Activated CD4-positive, alpha-beta memory T cell treated with anti-CD3 and anti-CD28 coated beads, Interleukin-2, amount 10 ng/mL, durations not matched to agents 7 days and 5 days (primary cell): ENCODE measurements at regions of chr14 and their contacts with region 1.

Region 1: DNA sequence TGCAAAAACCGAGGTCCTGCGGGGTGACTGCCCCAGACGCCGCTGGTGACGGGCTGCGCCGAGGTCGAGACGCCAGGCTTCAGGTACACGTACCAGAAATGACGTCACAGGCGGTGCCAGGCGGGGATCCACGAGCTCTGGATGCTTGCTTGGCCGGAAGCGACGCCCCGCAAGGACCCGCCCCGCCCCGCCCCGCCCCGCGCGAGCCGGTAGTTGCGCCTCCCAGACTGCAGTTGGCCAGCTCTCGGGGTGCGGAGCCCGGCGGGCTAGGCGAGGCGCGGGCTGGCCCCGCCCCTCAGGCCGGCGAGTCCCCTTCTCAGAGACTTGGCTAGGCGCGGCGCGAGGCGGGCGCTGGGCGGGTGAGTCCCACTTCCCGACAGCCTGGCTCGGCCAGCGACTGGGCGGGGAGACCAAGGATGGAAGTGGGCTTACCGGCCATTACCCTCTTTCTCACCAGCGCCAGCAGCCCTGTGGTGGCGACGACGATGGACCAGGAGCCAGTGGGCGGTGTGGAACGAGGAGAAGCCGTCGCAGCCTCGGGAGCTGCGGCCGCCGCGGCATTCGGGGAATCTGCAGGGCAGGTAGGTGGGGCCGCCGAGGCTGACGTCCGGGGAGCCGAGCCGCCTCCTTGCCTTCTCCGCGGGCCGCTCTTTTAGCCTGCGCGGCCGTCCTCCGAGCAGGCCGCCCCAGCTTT is at the start of gene FAM177A1:
- DNase-seq: peak; percentile 99
- H3K4me3 Mint-ChIP-seq: peak within 1 kb of the TSS; percentile 83
- H3K27ac Mint-ChIP-seq: peak within 1 kb of the TSS; percentile 96
- H3K4me1 Mint-ChIP-seq: peaks cover 37% of the 10 kb centered on the region
- H3K27me3 Mint-ChIP-seq: no peaks in the 10 kb centered on the region
- total RNA-seq, gene FAM177A1: 51.4 to 51.5 TPM

Region 2: DNA sequence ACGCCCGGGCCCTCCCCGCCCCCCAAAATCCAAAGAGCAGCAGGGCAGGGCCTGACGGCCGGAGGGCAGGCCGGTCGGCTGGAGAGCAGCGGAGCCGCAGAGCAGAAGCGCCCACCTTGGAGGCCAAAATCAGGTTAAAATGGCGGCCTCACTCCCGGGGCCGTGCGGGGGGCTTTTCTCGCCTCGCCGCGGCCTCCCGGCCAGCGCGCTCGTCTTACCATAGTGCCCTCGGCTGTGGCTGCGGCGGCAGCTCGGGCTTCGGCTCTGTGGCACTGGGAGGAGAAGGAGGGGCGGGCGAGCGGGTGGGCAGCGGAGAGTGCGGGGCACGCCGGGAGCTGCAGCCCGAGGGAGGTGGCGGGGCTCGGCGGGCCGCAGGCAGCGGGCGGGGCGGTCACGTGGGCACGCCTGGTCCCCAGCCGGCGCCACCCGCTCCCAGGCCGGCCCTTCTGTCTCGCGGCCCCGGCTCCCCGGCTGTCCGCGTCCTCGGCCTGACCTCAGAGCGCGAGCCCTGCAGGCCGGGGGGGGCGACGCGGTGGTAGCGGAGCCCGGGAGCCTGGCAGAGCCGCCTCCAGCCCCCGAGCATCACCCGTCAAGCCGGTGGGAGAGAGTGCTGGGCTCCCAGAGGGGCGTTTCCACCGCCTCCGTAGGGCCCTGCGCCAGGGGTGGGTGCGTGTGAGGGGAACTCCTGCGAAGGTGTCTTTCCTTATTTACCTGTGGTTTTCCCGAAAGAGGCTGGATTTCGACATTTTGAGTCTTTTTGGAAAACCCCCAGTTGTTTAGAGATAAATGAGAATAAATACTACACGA is 331.7 kb before region 1 on chr14 and contains the start of gene CFL2:
- CTCF ChIA-PET with region 1: no interaction called
- POLR2A ChIA-PET with region 1: interaction called, 10 read pairs
- DNase-seq: peak; percentile 70
- H3K4me3 Mint-ChIP-seq: peak within 1 kb of the TSS; percentile 87
- H3K27ac Mint-ChIP-seq: peak within 1 kb of the TSS; percentile 73
- H3K4me1 Mint-ChIP-seq: peaks cover 33% of the 10 kb centered on the region
- H3K27me3 Mint-ChIP-seq: peaks cover 4% of the 10 kb centered on the region
- total RNA-seq, gene CFL2: 7.7 to 9.0 TPM

Region 3: GRCh38 chr14:34875031-34875922 is 170.9 kb before region 1 on chr14 and contains the start of gene BAZ1A:
- CTCF ChIA-PET with region 1: no interaction called
- POLR2A ChIA-PET with region 1: interaction called, 20 read pairs
- DNase-seq: peak; percentile 44
- H3K4me3 Mint-ChIP-seq: peak within 1 kb of the TSS; percentile 96
- H3K27ac Mint-ChIP-seq: peak within 1 kb of the TSS; percentile 99
- H3K4me1 Mint-ChIP-seq: peaks cover 37% of the 10 kb centered on the region
- H3K27me3 Mint-ChIP-seq: no peaks in the 10 kb centered on the region
- total RNA-seq, gene BAZ1A: 49.8 to 53.1 TPM

Region 4: GRCh38 chr14:34931206-34931605 is 115.0 kb before region 1 on chr14:
- CTCF ChIA-PET with region 1: no interaction called
- POLR2A ChIA-PET with region 1: interaction called, 12 read pairs
- DNase-seq: peak; percentile 27
- H3K4me3 Mint-ChIP-seq: peak overlapping the region; percentile 4
- H3K27ac Mint-ChIP-seq: peak overlapping the region; percentile 91
- H3K4me1 Mint-ChIP-seq: peaks cover 32% of the 10 kb centered on the region
- H3K27me3 Mint-ChIP-seq: no peaks in the 10 kb centered on the region

Region 5: DNA sequence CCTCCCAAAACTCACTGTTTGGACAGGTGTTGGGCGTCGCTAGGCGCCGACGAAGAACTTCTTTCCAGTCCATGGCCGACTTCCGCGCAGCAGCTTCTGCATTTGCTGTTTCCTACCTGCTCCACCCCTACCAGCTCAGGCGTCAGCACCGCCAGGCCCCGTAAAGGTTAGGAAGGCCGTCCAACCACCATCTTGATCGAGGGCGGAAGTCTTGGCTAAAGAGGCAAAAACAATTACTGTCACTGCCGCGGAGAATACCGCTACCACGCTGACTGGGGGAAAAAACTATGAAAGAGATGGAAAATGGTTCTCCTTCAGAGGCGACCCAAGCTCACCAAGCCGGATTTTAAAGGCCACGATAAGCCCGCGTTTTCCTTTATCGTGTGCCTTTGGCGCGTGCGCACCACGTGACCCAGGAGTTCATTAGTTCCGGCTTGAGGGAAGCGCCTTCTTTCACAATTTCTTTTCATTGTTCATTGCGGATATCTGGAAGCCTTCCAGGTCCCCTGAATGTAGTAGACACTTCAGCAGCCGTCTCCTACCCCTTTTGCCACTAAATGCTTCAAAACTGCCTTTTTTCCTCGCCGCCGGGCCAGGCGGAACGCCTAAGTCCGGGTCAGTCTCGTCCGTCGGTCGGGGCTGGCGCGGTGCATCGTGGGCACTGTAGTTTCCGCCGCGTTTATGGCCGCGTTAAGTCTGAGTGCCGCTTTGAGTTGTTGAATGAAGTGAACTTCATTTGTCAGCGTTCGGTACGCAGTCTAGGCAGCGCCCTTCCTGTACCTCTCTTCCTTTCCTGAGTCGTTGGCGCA is 75.9 kb after region 1 on chr14 and contains the starts of genes PPP2R3C and PRORP:
- CTCF ChIA-PET with region 1: interaction called, 6 read pairs
- POLR2A ChIA-PET with region 1: interaction called, 37 read pairs
- DNase-seq: peak; percentile 92
- H3K4me3 Mint-ChIP-seq: peak within 1 kb of the TSS; percentile 91
- H3K27ac Mint-ChIP-seq: peak within 1 kb of the TSS; percentile 98
- H3K4me1 Mint-ChIP-seq: peaks cover 59% of the 10 kb centered on the region
- H3K27me3 Mint-ChIP-seq: no peaks in the 10 kb centered on the region
- total RNA-seq, gene PPP2R3C: 51.7 to 59.4 TPM
- total RNA-seq, gene PRORP: 43.3 to 44.9 TPM

Region 6: GRCh38 chr14:35292051-35292769 is 246.0 kb after region 1 on chr14 and contains the start of gene PSMA6:
- CTCF ChIA-PET with region 1: no interaction called
- POLR2A ChIA-PET with region 1: interaction called, 14 read pairs
- DNase-seq: peak; percentile 100
- H3K4me3 Mint-ChIP-seq: peak within 1 kb of the TSS; percentile 96
- H3K27ac Mint-ChIP-seq: peak within 1 kb of the TSS; percentile 92
- H3K4me1 Mint-ChIP-seq: peaks cover 42% of the 10 kb centered on the region
- H3K27me3 Mint-ChIP-seq: no peaks in the 10 kb centered on the region
- total RNA-seq, gene PSMA6: 235 to 242 TPM

Region 7: DNA sequence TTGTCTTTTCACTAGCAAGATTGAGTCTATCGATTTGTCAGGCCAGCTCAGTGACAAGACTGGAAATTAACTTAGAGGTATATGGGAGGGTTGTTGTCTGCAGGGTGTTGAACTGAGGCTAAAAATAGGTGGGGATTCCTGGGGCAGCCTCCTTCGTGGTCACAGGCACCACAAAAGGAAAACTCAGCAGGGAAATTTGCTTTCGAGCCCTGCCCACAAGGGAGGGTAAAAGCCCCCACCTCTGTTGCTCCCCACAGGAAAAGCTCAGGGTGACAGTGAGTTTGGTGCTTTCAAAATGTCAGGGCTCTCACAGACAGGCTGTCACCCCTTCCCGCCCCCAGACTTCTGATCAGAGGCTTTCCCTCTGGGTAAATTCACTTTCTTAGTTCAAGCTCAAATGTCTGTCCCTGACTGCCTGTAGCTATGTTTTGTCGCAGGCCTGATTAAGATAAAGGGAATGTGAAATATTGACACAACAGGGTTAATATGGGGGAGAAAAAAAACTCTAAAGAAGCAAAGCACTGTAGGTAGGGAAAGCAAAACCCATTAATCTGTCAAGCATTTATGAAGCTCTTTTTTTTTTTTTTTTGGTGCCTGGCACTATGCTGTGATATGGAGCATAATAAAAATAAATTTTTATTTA is 370.0 kb after region 1 on chr14:
- CTCF ChIA-PET with region 1: interaction called, 6 read pairs
- POLR2A ChIA-PET with region 1: interaction called, 18 read pairs
- DNase-seq: peak; percentile 62
- H3K4me3 Mint-ChIP-seq: peak overlapping the region; percentile 18
- H3K27ac Mint-ChIP-seq: peak overlapping the region; percentile 75
- H3K4me1 Mint-ChIP-seq: peaks cover 47% of the 10 kb centered on the region
- H3K27me3 Mint-ChIP-seq: no peaks in the 10 kb centered on the region